Pancreas (tissue), 10 donors: ENCODE measurements at regions of chr1 and their contacts with region 1.

Region 1: DNA sequence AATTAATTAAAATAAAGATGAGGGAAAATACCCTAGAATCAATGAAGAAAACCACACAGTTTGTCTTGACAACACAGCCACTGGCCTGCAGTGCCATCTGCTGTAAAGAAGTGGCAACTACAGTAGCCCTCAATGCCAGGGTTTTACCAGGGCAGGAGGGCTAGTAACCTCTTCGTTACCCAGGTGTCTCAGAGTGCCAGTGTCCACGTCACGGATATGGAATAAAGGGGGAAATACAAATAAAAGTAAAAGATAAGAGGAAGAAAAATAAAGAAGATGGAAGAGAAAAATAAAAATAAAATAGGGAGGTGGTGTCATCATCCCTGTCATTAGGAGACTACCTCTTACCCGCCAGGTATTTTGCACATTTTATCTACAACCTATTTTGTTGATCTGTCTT is 14.2 kb upstream of the SLC44A3 start:
- DNase-seq: peak in 4 of 6 donors; percentile 20 to 71 (median 56)
- ATAC-seq: peak; percentile 49 to 75 (median 73)
- H3K4me3 ChIP-seq: no peak overlapping the region
- H3K27ac ChIP-seq: no peak overlapping the region
- H3K4me1 ChIP-seq: peaks cover 14 to 35% (median 26%) of the 10 kb centered on the region in 3 donors
- H3K27me3 ChIP-seq: no peaks in the 10 kb centered on the region
- CTCF ChIP-seq: peak; percentile 83 to 96 (median 94)

Region 2: DNA sequence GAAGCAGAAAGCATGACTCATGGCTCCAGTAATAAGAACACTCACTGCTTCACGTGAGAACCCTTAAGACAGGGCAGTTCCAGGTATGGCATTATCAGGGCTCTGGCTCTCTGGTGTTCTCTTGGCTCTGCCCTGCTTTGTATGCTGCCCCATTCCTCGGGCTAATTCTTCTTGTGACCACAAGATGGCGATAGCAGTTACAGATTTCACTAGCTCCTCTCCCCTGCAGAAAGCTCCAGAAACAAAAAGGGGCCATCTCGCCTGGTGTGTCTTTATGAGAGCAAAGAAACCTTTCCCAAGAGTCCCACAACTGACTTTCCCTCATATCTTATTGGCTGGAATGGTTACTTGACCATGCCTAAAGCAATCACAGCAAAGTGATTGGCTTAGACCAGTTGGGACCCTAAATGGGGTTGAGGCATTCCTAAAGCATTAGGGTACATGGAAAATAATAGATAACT is 324.4 kb before region 1 on chr1:
- intact Hi-C with region 1: loop called in 1 of 3 experiments (anchors 10 kb)
- DNase-seq: peak in 4 of 6 donors; percentile 32 to 71 (median 48)
- ATAC-seq: peak; percentile 96 to 98 (median 97)
- H3K4me3 ChIP-seq: no peak overlapping the region
- H3K27ac ChIP-seq: no peak overlapping the region
- H3K4me1 ChIP-seq: peaks cover 0 to 9% (median 4%) of the 10 kb centered on the region in 3 donors
- H3K27me3 ChIP-seq: no peaks in the 10 kb centered on the region
- CTCF ChIP-seq: peak; percentile 57 to 82 (median 78)

Region 3: GRCh38 chr1:94527447-94528031 is 278.4 kb before region 1 on chr1:
- intact Hi-C with region 1: loop called in 1 of 3 experiments (anchors 5 kb)
- DNase-seq: peak in 1 of 6 donors; percentile 60
- ATAC-seq: peak; percentile 63 to 76 (median 72)
- H3K4me3 ChIP-seq: no peak overlapping the region
- H3K27ac ChIP-seq: peak overlapping the region in 2 of 4 donors; percentile 1 to 50
- H3K4me1 ChIP-seq: peaks cover 0 to 9% (median 0%) of the 10 kb centered on the region in 3 donors
- H3K27me3 ChIP-seq: no peaks in the 10 kb centered on the region
- CTCF ChIP-seq: no peak